ENCODE measurements at regions of chr4 and their contacts with region 1.

Region 1: DNA sequence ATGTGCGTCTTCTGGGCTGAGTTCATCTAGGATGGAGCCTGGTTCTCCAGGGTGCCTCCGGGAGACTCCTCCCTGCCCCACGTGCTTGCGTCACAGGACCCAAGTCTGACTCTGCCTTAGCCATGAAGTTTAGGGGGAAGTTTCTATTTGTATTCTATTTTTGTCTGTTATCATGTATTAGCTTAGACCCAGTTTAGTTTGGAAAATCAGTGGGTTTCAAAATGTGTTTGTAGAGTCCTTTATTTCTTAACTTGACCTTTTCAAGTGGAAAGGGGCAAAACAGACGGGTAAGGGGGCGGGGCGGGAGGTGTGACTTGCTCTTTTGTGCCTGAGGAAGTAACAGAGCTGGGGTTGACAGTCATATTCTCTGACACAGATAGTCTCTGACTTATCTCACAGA is 86.0 kb downstream of the HTT start:
- DNase-seq: no peak
- ATAC-seq: no peak
- H3K4me3 Mint-ChIP-seq: no peak overlapping the region
- H3K27ac Mint-ChIP-seq: no peak overlapping the region
- H3K4me1 Mint-ChIP-seq: peaks cover 4% of the 10 kb centered on the region
- H3K27me3 Mint-ChIP-seq: no peaks in the 10 kb centered on the region; the same call in none of the 2 replicates
- CTCF ChIP-seq: no peak

Region 2: GRCh38 chr4:2418650-2419571 is 741.5 kb before region 1 on chr4 and contains the start of gene CFAP99:
- CTCF ChIA-PET with region 1: no interaction called
- POLR2A ChIA-PET with region 1: interaction called, 10 read pairs
- DNase-seq: peak; percentile 99
- ATAC-seq: peak; percentile 71
- H3K4me3 Mint-ChIP-seq: peak within 1 kb of the TSS; percentile 86
- H3K27ac Mint-ChIP-seq: no peak within 1 kb of the TSS
- H3K4me1 Mint-ChIP-seq: peaks cover 44% of the 10 kb centered on the region
- H3K27me3 Mint-ChIP-seq: peaks cover 78% of the 10 kb centered on the region
- CTCF ChIP-seq: no peak
- total RNA-seq, gene CFAP99: 0.23 to 0.41 TPM in 2 of 3 replicates, not detected in the other

Measured in WTC11 (cell line).